ENCODE measurements at regions of chr17 and their contacts with region 1.

Region 1: GRCh38 chr17:57523926-57524632 is 221.0 kb downstream of the CCDC182 start:
- DNase-seq: peak; percentile 72 to 74
- ATAC-seq: peak; percentile 56 to 93 (median 86)
- H3K4me3 ChIP-seq: no peak overlapping the region
- H3K27ac ChIP-seq: peak overlapping the region in 4 of 10 donors; percentile 16 to 41 (median 25)
- H3K4me1 ChIP-seq: peaks cover 6 to 63% (median 26%) of the 10 kb centered on the region in 9 donors
- H3K27me3 ChIP-seq: no peaks in the 10 kb centered on the region
- CTCF ChIP-seq: no peak

Region 2: DNA sequence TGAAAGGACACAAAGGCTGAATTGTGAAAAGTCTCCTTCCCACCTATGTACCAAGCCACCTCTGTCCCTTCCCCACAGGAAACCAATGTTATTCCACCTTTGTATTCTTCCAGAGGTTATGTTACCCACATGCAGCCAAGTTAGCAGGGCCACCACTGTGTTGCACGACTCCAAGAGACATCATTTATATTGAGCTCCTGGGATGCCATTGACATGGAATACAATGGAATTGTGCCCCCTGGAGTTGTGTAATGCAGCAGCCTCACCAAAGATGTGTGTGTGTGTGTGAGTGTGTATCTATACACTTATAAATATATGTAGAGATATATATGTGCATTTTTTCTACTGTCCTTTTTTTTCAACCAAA is 289.3 kb before region 1 on chr17:
- intact Hi-C with region 1: loop called in 1 of 10 experiments (anchors 10 kb)
- DNase-seq: no peak
- ATAC-seq: no peak
- H3K4me3 ChIP-seq: no peak overlapping the region
- H3K27ac ChIP-seq: no peak overlapping the region
- H3K4me1 ChIP-seq: no peaks in the 10 kb centered on the region
- H3K27me3 ChIP-seq: peaks cover 0 to 13% (median 0%) of the 10 kb centered on the region in 7 donors
- CTCF ChIP-seq: no peak

Region 3: DNA sequence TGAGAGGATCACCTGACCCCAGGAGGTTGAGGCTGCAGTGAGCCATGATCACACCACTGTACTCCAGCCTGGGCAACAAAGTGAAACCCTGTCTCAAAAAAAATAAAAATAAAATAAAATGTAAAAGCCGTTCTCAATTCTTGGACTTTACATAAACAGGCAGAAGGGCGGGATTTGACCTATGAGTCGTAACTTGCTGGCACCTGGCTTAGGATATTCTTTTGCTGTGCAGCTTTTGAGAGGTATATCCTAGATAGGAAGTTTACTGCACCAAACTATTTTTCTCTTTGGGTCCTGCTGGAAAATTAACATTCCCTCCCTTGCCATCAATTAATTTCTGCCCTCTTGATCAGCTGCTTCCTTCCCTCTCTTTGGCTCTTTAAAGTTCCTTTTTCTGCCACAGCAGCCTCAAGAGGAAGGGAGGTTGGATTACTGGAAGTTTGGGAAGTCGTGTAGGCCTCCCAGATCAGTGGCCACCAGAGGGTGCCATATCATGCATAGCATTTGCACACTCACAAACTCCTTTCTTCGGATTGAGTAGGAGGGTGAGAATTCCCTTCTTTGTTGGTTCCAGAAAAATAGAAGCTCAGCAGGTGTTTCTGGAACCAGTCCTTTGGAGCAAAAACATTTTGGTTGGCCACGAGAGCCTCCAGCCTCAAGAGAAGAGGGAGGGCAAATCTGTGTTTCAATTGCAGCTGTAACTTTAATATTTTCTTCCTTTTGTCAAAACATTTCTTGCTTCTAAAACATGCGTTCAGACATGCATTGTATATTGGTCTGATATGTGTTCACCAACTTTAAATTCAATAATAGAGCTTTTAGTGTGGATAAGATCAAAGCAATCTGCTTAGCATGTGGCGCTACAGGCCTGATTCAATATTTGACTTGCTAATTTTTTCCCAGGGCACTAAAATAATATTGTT is 73.7 kb after region 1 on chr17:
- intact Hi-C with region 1: no loop called
- DNase-seq: peak; percentile 57 to 81
- ATAC-seq: peak in 7 of 8 donors; percentile 39 to 80 (median 71)
- H3K4me3 ChIP-seq: no peak overlapping the region
- H3K27ac ChIP-seq: peak overlapping the region in 8 of 10 donors; percentile 5 to 65 (median 58)
- H3K4me1 ChIP-seq: peaks cover 0 to 57% (median 34%) of the 10 kb centered on the region in 9 donors
- H3K27me3 ChIP-seq: no peaks in the 10 kb centered on the region
- CTCF ChIP-seq: peak; percentile 67 to 93 (median 85)